ENCODE measurements at regions of chr1 and their contacts with region 1.

Region 1: DNA sequence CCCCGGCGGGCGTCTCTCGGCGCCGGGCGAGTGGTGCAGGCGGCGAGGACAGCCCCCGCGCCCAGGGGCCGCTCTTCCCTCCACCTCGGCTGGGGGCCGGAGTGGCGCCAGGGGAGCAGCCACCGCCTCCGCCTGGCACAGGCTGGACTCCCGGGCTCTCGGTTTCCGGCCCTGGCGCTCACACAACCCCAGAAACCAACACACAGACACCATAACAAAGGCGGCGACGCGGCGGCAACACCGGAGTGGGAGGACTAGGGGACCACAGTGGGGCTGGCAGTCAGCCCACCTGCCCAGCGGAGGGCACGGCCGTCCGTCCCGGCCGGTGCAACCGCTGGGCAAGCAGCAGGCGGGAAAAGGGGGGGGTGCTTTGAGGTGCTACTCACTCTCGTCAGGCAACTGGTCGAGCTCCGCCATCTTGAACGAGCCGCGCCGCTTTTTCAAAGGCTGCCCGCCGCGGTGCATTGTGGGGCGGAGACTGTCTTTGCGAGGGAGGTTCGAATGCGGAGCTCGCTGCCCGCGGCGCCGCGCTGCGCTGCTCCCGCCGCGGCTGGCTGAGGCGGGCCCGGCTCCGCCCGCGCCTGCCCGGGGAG is at the start of gene LIN9:
- DNase-seq: peak; percentile 95
- H3K4me3 ChIP-seq: peak within 1 kb of the TSS; percentile 97
- H3K27ac ChIP-seq: peak within 1 kb of the TSS; percentile 76
- H3K4me1 ChIP-seq: peaks cover 53% of the 10 kb centered on the region
- CTCF ChIP-seq: peak; percentile 24; the same call in 1 of the 2 replicates
- total RNA-seq, gene LIN9: 17.2 and 19.7 TPM in 2 replicates

Region 2: GRCh38 chr1:226233293-226233692 is 75.5 kb before region 1 on chr1:
- CTCF ChIA-PET with region 1: interaction called, 3 read pairs
- POLR2A ChIA-PET with region 1: interaction called, 8 read pairs
- intact Hi-C with region 1: loop called (anchors 2 kb)
- DNase-seq: peak; percentile 93
- H3K4me3 ChIP-seq: peak overlapping the region; percentile 60
- H3K27ac ChIP-seq: peak overlapping the region; percentile 81
- H3K4me1 ChIP-seq: peaks cover 51% of the 10 kb centered on the region
- CTCF ChIP-seq: no peak

Region 3: DNA sequence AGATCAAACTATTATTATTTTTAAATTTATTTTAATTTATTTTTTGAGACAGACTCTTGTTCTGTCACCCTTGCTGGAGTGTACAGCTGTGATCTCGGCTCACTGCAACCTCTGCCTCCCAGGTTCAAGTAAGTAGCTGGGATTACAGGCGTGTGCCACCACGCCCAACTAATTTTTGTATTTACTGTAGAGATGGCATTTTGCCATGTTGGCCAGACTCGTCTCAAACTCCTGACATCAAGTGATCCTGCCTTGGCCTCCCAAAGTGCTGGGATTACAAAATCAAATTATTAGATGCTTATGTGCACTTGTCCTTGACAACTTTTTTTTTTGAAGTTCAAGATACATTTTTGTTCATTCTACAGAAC is 15.3 kb before region 1 on chr1:
- CTCF ChIA-PET with region 1: no interaction called
- POLR2A ChIA-PET with region 1: interaction called, 14 read pairs
- intact Hi-C with region 1: no loop called
- DNase-seq: no peak
- H3K4me3 ChIP-seq: no peak overlapping the region
- H3K27ac ChIP-seq: no peak overlapping the region
- H3K4me1 ChIP-seq: no peaks in the 10 kb centered on the region
- CTCF ChIP-seq: no peak

Region 4: GRCh38 chr1:226332947-226333346 is 24.1 kb after region 1 on chr1:
- CTCF ChIA-PET with region 1: interaction called, 11 read pairs
- POLR2A ChIA-PET with region 1: interaction called, 26 read pairs
- intact Hi-C with region 1: no loop called
- DNase-seq: peak; percentile 40
- H3K4me3 ChIP-seq: peak overlapping the region; percentile 55
- H3K27ac ChIP-seq: peak overlapping the region; percentile 69
- H3K4me1 ChIP-seq: peaks cover 62% of the 10 kb centered on the region
- CTCF ChIP-seq: no peak

Region 5: GRCh38 chr1:226349801-226350518 is 41.1 kb after region 1 on chr1:
- CTCF ChIA-PET with region 1: interaction called, 4 read pairs
- POLR2A ChIA-PET with region 1: interaction called, 11 read pairs
- intact Hi-C with region 1: loop called (anchors 1 kb)
- DNase-seq: peak; percentile 85
- H3K4me3 ChIP-seq: peak overlapping the region; percentile 57
- H3K27ac ChIP-seq: peak overlapping the region; percentile 98
- H3K4me1 ChIP-seq: peaks cover 89% of the 10 kb centered on the region
- CTCF ChIP-seq: no peak

Region 6: GRCh38 chr1:226355669-226356551 is 47.1 kb after region 1 on chr1:
- CTCF ChIA-PET with region 1: interaction called, 4 read pairs
- POLR2A ChIA-PET with region 1: interaction called, 11 read pairs
- intact Hi-C with region 1: loop called (anchors 1 kb)
- DNase-seq: peak; percentile 96
- H3K4me3 ChIP-seq: peak overlapping the region; percentile 50
- H3K27ac ChIP-seq: peak overlapping the region; percentile 98
- H3K4me1 ChIP-seq: peaks cover 76% of the 10 kb centered on the region
- CTCF ChIP-seq: no peak

Region 7: DNA sequence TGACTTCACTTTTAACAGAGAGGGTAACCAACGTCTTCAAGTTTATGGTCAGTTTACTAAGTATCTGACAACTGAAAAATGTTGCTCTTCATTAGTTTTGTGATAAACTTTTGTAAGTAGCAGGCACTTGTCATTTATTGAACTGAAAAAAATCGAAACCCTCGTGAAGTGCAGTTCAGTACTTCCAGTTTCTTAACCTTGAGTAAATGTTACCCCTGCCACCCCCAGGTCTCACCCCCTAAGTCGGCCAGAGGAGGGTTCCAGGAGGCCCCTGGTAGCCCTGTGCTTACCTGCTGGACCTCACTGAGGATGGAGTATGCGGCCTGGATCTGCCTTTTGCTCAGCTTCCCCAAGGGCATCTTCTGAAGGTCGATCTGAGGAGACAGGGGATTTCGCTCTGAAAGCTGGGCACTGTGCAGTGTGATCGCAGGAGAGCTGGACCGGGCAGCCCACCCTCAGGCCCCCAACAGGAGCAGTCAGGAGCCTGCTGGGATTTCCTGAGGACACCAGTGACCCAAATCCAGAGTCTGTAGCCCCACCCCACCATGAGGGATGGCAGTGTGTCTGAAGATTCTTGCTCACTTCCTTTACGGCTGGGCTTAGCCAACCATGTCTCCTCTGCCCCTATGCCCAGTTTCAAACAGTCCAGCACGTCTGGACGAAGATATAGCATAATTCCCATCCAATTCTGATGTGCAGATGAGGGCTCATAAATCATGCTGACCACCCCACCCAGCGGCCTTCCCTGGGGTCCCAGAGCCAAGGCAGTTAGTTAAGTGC is 61.5 kb after region 1 on chr1:
- CTCF ChIA-PET with region 1: no interaction called
- POLR2A ChIA-PET with region 1: interaction called, 8 read pairs
- intact Hi-C with region 1: loop called (anchors 2 kb)
- DNase-seq: peak; percentile 83
- H3K4me3 ChIP-seq: peak overlapping the region; percentile 61
- H3K27ac ChIP-seq: peak overlapping the region; percentile 88
- H3K4me1 ChIP-seq: peaks cover 53% of the 10 kb centered on the region
- CTCF ChIP-seq: no peak

Measured in OCI-LY7 (cell line).